IMR-90 (cell line): ENCODE measurements at regions of chr5 and their contacts with region 1.

Region 1: DNA sequence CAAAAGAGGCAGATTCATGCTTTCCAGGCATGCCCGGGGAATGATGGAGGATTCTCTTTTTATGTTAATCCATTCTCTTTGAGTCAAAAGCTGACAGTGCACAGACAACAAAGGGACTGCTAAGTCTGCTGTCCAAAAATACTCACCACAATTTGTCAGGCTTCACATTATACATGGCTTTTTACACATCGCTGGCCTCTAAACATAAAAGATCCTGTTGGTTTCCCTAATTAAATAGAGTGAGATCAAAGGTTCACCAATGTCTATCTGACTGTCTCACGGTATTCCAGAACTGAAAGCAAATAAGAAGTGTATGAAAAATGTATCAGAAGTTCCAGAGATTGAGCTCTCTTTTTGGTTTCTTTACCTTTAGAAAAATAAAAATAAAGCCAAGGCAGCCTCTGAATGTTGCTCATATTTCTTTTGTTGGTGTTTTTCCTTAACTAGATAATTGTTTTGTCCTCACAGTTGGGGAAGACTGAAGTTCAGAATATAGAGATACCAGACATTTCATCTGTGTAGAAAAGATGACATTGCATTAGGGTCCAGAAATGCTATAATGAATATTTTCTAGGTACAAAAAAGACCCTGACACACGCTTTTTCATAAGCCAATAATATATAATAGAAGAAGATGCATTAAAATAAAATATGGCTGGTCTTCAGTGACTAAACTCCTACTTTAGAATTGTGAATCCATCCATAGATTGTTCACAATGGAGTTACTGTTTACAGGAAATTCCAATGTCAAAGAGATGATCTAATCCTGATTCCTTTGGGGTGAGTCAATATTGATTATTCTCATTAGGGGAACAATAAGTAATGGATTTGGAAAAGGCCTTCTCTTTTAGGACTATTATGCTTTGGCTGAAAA is 688.2 kb upstream of the CDH6 start:
- DNase-seq: peak; percentile 64
- ATAC-seq: peak; percentile 37; the same call in 1 of the 2 replicates
- H3K4me3 ChIP-seq: no peak overlapping the region
- H3K27ac ChIP-seq: no peak overlapping the region
- H3K4me1 ChIP-seq: no peaks in the 10 kb centered on the region
- H3K27me3 ChIP-seq: no peaks in the 10 kb centered on the region
- CTCF ChIP-seq: no peak
- POLR2A ChIP-seq: no peak
- RAD21 ChIP-seq: no peak

Region 2: DNA sequence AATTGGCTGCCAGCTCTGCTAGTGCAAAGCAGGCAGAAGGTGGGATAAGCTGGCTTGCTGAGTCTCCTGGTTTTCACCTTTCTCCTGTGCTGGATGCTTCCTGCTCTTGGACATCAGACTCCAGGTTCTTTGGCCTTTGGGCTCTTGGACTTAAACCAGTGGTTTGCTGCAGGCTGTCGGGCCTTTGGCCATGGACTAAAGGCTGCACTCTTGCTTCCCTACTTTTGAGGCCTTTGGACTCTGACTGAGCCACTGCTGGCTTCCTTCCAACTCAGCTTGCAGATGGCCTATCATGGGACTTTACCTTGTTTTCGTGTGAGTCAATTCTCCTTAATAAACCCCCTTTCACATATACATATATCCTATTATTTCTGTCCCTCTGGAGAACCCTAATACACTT is 605.7 kb before region 1 on chr5:
- CTCF ChIA-PET with region 1: no interaction called
- POLR2A ChIA-PET with region 1: no interaction called
- dilution Hi-C with region 1: no loop called
- in situ Hi-C with region 1: no loop called
- intact Hi-C with region 1: no loop called
- DNase-seq: no peak
- ATAC-seq: no peak
- H3K4me3 ChIP-seq: no peak overlapping the region
- H3K27ac ChIP-seq: no peak overlapping the region
- H3K4me1 ChIP-seq: no peaks in the 10 kb centered on the region
- H3K27me3 ChIP-seq: no peaks in the 10 kb centered on the region
- CTCF ChIP-seq: no peak
- POLR2A ChIP-seq: no peak
- RAD21 ChIP-seq: no peak

Region 3: DNA sequence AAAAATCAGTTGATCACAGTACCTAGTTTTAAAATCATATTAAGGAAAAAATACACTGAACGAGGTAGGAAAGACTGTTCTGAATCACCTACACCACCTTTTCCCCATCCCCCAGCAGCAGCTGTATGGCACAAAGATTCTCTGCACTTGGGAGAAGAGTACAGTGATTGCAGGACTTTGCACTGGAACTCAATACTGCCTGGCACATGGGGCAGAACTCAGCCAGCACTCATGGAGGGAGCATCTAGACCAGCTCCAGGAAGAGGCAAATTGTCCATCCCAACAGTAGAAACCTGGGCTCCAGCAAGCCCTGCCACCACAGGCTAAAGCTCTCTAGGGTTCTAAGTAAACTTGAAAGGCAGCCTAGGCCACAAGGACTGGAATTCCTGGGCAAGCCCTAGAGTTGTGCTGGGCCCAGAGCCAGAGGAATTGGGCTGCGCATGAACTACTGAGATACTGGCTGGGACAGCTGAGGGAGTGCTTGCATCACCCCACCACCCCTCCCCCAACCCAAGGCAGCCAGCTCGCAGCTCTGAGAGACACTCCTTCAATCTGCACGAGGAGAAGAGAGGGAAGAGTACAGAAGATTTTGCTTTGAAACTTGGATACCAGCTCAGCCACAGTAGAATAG is 33.9 kb after region 1 on chr5:
- CTCF ChIA-PET with region 1: no interaction called
- POLR2A ChIA-PET with region 1: interaction called, 13 read pairs
- dilution Hi-C with region 1: no loop called
- in situ Hi-C with region 1: no loop called
- intact Hi-C with region 1: no loop called
- DNase-seq: peak; percentile 28
- ATAC-seq: peak; percentile 84
- H3K4me3 ChIP-seq: no peak overlapping the region
- H3K27ac ChIP-seq: no peak overlapping the region
- H3K4me1 ChIP-seq: no peaks in the 10 kb centered on the region
- H3K27me3 ChIP-seq: no peaks in the 10 kb centered on the region
- CTCF ChIP-seq: no peak
- POLR2A ChIP-seq: no peak
- RAD21 ChIP-seq: no peak

Region 4: DNA sequence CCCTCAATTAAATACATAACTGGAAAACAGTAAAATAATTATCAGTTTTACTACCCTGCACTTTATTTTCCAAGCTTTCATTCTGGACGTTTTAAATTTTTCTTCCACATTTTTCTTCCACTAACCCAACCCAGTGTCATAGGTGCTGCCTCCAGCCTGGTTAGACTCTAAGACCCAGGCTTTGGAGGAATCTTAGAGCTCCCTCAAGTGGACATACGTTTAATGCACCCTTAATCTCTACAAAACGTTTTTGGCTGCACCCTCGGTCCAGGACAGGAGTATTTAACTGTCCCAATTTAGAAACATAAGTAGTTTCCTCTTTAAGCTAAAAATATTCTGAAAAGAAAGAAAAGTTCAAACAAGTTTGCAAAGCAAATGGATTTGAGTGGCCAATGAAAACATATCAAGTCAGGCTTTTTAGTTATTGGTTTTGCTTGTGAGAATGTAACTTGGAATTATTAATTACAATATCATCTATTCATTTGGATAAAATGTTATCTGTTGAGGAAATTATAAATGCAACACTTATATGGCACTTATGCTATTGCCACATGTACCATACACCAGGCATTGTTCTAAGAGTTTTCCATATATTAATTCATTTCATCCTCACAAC is 727.1 kb after region 1 on chr5:
- CTCF ChIA-PET with region 1: no interaction called
- POLR2A ChIA-PET with region 1: no interaction called
- dilution Hi-C with region 1: no loop called
- in situ Hi-C with region 1: no loop called
- intact Hi-C with region 1: loop called (anchors 10 kb)
- DNase-seq: peak; percentile 74
- ATAC-seq: peak; percentile 90
- H3K4me3 ChIP-seq: no peak overlapping the region
- H3K27ac ChIP-seq: no peak overlapping the region
- H3K4me1 ChIP-seq: peaks cover 4% of the 10 kb centered on the region; the same call in 1 of the 2 replicates
- H3K27me3 ChIP-seq: no peaks in the 10 kb centered on the region
- CTCF ChIP-seq: peak; percentile 92
- POLR2A ChIP-seq: no peak
- RAD21 ChIP-seq: peak; percentile 95